ENCODE measurements at regions of chr1 and their contacts with region 1.

Region 1: GRCh38 chr1:185646202-185646683 is 87.9 kb upstream of the HMCN1 start:
- DNase-seq: peak; percentile 78
- ATAC-seq: peak; percentile 85
- H3K4me3 ChIP-seq: peak overlapping the region in 1 of 2 experiments; percentile 39; a peak in 3 of 4 replicates
- H3K27ac ChIP-seq: peak overlapping the region; percentile 33; the same call in 1 of the 2 replicates
- H3K4me1 ChIP-seq: peaks cover 13 to 30% of the 10 kb centered on the region in 2 experiments; a peak in 3 of 4 replicates
- H3K27me3 ChIP-seq: no peaks in the 10 kb centered on the region
- CTCF ChIP-seq: no peak
- POLR2A ChIP-seq: no peak
- RAD21 ChIP-seq: 0 out of 2 replicates have a peak, but pooled peaks have one; percentile 7

Region 2: DNA sequence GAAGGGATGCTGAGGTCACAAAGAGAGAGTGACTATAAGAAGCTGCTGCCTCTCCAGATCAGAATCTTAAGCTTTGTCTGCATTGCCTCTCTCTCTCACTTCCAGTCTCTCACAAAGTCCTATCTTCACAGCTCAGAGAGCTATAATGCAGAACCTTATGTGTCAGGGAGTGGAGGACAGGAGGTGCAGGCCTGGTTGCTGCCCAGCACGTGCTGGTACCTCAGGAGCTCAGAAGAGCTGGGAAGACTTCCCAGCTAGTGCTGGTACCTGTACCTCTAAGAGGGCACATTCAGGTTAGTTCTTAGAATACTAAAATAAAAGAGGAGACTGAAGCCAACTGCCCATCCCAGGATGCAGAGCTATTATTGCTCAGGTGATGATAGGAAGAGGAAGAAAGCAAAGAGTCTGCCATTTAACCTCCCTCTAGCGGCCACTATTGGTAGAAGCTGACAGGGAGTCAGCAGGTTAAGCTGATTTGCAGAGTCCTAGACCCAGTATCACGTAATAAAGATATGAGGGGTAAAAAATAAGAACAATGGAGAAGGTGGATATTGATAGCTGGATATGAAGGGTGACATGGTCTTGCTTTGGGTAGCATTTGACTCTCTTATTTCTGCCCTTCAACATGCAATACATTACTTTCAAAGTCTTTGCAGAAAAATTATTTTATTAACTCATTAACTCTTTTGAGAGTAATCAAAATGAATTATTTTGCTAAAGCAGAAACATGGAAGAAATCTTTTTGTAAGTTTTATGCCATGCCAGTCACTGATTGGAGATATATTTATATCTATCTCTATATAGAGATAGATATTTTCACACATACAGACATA is 50.2 kb before region 1 on chr1:
- CTCF ChIA-PET with region 1: interaction called, 11 read pairs
- POLR2A ChIA-PET with region 1: no interaction called
- RAD21 ChIA-PET with region 1: interaction called in 1 of 2 experiments, 3 read pairs
- intact Hi-C with region 1: no loop called
- DNase-seq: peak; percentile 51
- ATAC-seq: peak; percentile 98
- H3K4me3 ChIP-seq: no peak overlapping the region
- H3K27ac ChIP-seq: no peak overlapping the region
- H3K4me1 ChIP-seq: no peaks in the 10 kb centered on the region
- H3K27me3 ChIP-seq: no peaks in the 10 kb centered on the region
- CTCF ChIP-seq: peak; percentile 45 to 88 (median 86); a peak in 5 of 6 replicates
- POLR2A ChIP-seq: no peak
- RAD21 ChIP-seq: peak; percentile 62

Region 3: GRCh38 chr1:186026946-186027345 is 380.7 kb after region 1 on chr1:
- CTCF ChIA-PET with region 1: no interaction called
- POLR2A ChIA-PET with region 1: no interaction called
- RAD21 ChIA-PET with region 1: no interaction called
- intact Hi-C with region 1: no loop called
- DNase-seq: no peak
- ATAC-seq: no peak
- H3K4me3 ChIP-seq: no peak overlapping the region
- H3K27ac ChIP-seq: no peak overlapping the region
- H3K4me1 ChIP-seq: no peaks in the 10 kb centered on the region
- H3K27me3 ChIP-seq: no peaks in the 10 kb centered on the region
- CTCF ChIP-seq: no peak
- POLR2A ChIP-seq: no peak
- RAD21 ChIP-seq: no peak

Measured in HCT116 (cell line).